A673 (cell line): ENCODE measurements at regions of chr9 and their contacts with region 1.

Region 1: GRCh38 chr9:75001719-75002422 is 26.2 kb downstream of the CARNMT1 start:
- DNase-seq: peak; percentile 85
- H3K4me3 ChIP-seq: no peak overlapping the region
- H3K27ac ChIP-seq: no peak overlapping the region
- H3K4me1 ChIP-seq: no peaks in the 10 kb centered on the region
- H3K27me3 ChIP-seq: no peaks in the 10 kb centered on the region
- CTCF ChIP-seq: peak; percentile 71

Region 2: GRCh38 chr9:74773886-74774479 is 227.9 kb before region 1 on chr9:
- CTCF ChIA-PET with region 1: interaction called, 4 read pairs
- POLR2A ChIA-PET with region 1: no interaction called
- intact Hi-C with region 1: loop called (anchors 1 kb)
- DNase-seq: peak; percentile 74
- H3K4me3 ChIP-seq: no peak overlapping the region
- H3K27ac ChIP-seq: no peak overlapping the region
- H3K4me1 ChIP-seq: no peaks in the 10 kb centered on the region
- H3K27me3 ChIP-seq: no peaks in the 10 kb centered on the region
- CTCF ChIP-seq: peak; percentile 89

Region 3: GRCh38 chr9:74804018-74804385 is 197.9 kb before region 1 on chr9:
- CTCF ChIA-PET with region 1: no interaction called
- POLR2A ChIA-PET with region 1: no interaction called
- intact Hi-C with region 1: no loop called
- DNase-seq: no peak
- H3K4me3 ChIP-seq: no peak overlapping the region
- H3K27ac ChIP-seq: no peak overlapping the region
- H3K4me1 ChIP-seq: no peaks in the 10 kb centered on the region
- H3K27me3 ChIP-seq: no peaks in the 10 kb centered on the region
- CTCF ChIP-seq: no peak

Region 4: DNA sequence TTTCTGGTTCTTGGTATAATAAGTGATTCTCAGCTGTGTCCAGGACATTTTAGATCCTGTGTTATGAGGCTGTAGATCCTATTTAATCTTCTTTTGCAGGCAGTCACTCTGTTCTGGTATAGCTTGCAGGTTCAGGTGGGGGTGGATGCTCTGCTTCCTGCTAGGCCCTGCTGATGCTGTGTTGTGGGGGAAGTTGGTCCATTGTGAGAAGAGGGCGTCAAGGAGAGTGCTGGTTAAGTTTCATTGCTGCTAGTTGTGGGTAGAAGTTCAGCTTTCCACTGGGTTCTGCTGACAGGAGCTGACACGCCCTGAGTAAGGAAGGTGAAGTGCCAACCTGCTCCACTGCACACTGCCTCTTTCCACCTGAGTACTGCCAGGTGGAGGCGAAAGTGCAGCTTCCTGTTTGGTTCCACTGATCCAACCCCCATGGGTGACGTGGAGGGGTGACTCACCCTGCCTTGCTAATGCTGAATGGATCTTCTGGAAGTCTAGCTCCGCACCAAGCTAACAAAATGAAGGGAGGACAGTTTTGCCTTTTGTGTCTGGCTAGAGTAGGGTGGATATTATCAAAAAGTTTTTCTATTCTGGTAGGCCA is 69.8 kb after region 1 on chr9:
- CTCF ChIA-PET with region 1: no interaction called
- POLR2A ChIA-PET with region 1: no interaction called
- intact Hi-C with region 1: loop called (anchors 2 kb)
- DNase-seq: no peak
- H3K4me3 ChIP-seq: no peak overlapping the region
- H3K27ac ChIP-seq: no peak overlapping the region
- H3K4me1 ChIP-seq: no peaks in the 10 kb centered on the region
- H3K27me3 ChIP-seq: no peaks in the 10 kb centered on the region
- CTCF ChIP-seq: no peak

Region 5: DNA sequence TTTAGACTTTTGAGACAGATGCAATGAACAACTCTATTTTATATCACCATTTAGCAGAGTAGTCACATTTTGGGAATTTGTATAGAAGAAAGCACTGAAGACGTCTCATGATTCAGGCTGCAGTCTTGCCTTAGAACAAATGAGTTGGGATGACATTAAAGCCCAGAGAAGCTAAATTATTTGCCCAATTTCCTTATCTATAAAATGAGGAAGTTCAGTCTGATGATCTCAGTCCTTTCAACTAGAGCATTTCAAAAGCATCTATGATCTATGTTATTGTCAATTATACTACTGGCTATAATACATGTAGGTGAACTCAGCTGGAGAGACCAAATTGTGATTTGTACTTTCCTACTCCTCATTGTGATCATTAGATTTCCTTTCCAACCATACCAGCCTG is 240.6 kb after region 1 on chr9:
- CTCF ChIA-PET with region 1: no interaction called
- POLR2A ChIA-PET with region 1: no interaction called
- intact Hi-C with region 1: no loop called
- DNase-seq: no peak
- H3K4me3 ChIP-seq: no peak overlapping the region
- H3K27ac ChIP-seq: no peak overlapping the region
- H3K4me1 ChIP-seq: no peaks in the 10 kb centered on the region
- H3K27me3 ChIP-seq: peaks cover 7% of the 10 kb centered on the region
- CTCF ChIP-seq: no peak